PC-3 (cell line): ENCODE measurements at regions of chr17 and their contacts with region 1.

Region 1: DNA sequence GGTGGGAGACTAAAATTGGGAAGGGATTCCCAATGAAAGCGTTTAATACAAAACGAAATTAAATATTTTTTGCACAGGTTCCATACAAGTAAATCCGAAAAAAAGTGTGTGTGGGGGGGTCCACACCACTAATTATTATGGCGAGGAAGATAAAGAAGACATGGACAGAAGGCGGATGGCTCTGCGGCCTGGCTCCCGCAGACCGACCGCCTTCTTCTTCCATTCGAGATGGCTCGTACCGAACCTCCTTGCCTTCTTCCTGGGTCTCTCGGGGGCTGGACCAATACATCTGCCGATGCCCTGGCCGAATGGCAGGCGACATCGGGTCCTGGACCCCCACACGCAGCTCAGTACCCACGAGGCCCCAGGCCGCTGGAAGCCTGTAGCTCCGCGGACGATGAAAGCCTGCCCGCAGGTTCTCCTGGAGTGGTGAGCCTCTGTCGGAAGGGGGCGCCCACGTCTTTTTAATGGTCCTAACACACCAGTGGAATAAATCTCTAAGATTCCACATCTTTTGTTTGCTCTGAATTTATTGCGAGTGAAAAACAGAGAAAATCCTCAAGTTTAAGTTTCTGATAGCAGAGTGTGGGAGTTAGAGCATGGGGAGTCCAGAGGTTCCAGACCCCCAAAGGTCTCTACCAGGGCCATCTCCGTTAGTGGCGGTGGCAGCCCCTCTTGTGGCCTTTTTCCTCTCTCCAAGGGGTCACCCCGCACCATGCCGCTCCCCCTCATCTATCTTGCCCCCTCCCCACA is 1.4 kb downstream of the PRAC2 start:
- DNase-seq: peak; percentile 97
- ATAC-seq: peak; percentile 6
- H3K4me3 ChIP-seq: peak overlapping the region; percentile 90
- H3K27ac ChIP-seq: peak overlapping the region; percentile 91
- H3K4me1 ChIP-seq: peaks cover 39% of the 10 kb centered on the region
- H3K27me3 ChIP-seq: no peaks in the 10 kb centered on the region
- CTCF ChIP-seq: peak; percentile 96

Region 2: GRCh38 chr17:48671697-48672171 is 52.7 kb before region 1 on chr17:
- CTCF ChIA-PET with region 1: interaction called, 27 read pairs
- POLR2A ChIA-PET with region 1: interaction called, 4 read pairs
- intact Hi-C with region 1: no loop called
- DNase-seq: peak; percentile 95
- ATAC-seq: peak; percentile 72
- H3K4me3 ChIP-seq: peak overlapping the region; percentile 64
- H3K27ac ChIP-seq: no peak overlapping the region
- H3K4me1 ChIP-seq: peaks cover 5% of the 10 kb centered on the region; the same call in 1 of the 2 replicates
- H3K27me3 ChIP-seq: no peaks in the 10 kb centered on the region
- CTCF ChIP-seq: peak; percentile 96

Region 3: DNA sequence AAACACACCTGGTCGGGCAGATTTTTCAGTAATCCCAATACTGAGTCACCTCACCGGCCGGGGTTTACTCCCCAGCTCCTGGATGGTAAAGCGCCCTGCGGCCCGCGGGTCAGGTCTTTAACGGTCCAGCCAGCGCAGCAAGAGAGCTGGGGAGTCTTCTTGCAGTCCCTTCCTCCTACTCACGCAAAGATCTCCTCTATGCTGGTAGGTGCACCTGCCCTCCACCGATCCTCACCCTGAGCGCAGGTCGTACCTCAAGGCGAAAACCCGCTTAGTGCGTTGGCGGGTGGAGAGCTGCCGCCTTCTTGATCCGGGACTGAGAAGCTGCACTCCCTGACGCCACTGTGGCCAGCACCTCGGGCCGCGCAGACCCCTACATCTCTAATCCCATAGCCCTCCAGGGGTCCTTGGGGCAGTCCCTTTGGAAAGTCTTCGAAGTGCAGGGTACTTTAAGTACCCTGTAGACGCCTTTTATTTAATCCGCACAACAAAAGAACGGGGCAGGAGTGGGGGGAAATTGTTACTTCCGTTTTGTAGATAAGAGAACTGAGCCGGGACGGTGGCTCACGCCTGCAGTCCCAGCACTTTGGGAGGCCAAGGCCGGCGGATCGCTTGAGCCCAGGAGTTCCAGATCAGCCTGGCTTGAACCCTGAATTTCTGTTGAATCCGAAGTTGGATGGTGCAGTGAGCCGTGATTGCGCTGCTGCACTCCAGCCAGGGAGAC is 14.5 kb after region 1 on chr17:
- CTCF ChIA-PET with region 1: interaction called, 14 read pairs
- POLR2A ChIA-PET with region 1: interaction called, 16 read pairs
- intact Hi-C with region 1: loop called (anchors 1 kb)
- DNase-seq: peak; percentile 91
- ATAC-seq: peak; percentile 53
- H3K4me3 ChIP-seq: peak overlapping the region; percentile 66
- H3K27ac ChIP-seq: peak overlapping the region; percentile 61
- H3K4me1 ChIP-seq: peaks cover 52% of the 10 kb centered on the region
- H3K27me3 ChIP-seq: no peaks in the 10 kb centered on the region
- CTCF ChIP-seq: no peak

Region 4: GRCh38 chr17:48756830-48757251 is 32.4 kb after region 1 on chr17:
- CTCF ChIA-PET with region 1: interaction called, 8 read pairs
- POLR2A ChIA-PET with region 1: interaction called, 8 read pairs
- intact Hi-C with region 1: loop called (anchors 2 kb)
- DNase-seq: peak; percentile 43
- ATAC-seq: peak; percentile 44
- H3K4me3 ChIP-seq: no peak overlapping the region
- H3K27ac ChIP-seq: peak overlapping the region; percentile 32
- H3K4me1 ChIP-seq: peaks cover 55% of the 10 kb centered on the region
- H3K27me3 ChIP-seq: no peaks in the 10 kb centered on the region
- CTCF ChIP-seq: no peak

Region 5: GRCh38 chr17:48791128-48792032 is 67.0 kb after region 1 on chr17:
- CTCF ChIA-PET with region 1: interaction called, 76 read pairs
- POLR2A ChIA-PET with region 1: interaction called, 6 read pairs
- intact Hi-C with region 1: loop called (anchors 1 kb)
- DNase-seq: peak; percentile 99
- ATAC-seq: peak; percentile 92
- H3K4me3 ChIP-seq: peak overlapping the region; percentile 19; the same call in 1 of the 2 replicates
- H3K27ac ChIP-seq: no peak overlapping the region
- H3K4me1 ChIP-seq: peaks cover 30% of the 10 kb centered on the region
- H3K27me3 ChIP-seq: no peaks in the 10 kb centered on the region
- CTCF ChIP-seq: peak; percentile 98

Region 6: GRCh38 chr17:48878918-48879898 is 154.8 kb after region 1 on chr17:
- CTCF ChIA-PET with region 1: interaction called, 18 read pairs
- POLR2A ChIA-PET with region 1: interaction called, 5 read pairs
- intact Hi-C with region 1: loop called (anchors 2 kb)
- DNase-seq: peak; percentile 91
- ATAC-seq: peak; percentile 88
- H3K4me3 ChIP-seq: no peak overlapping the region
- H3K27ac ChIP-seq: no peak overlapping the region
- H3K4me1 ChIP-seq: no peaks in the 10 kb centered on the region
- H3K27me3 ChIP-seq: no peaks in the 10 kb centered on the region
- CTCF ChIP-seq: peak; percentile 99